Endothelial cell of umbilical vein (primary cell): ENCODE measurements at regions of chr4 and their contacts with region 1.

Region 1: DNA sequence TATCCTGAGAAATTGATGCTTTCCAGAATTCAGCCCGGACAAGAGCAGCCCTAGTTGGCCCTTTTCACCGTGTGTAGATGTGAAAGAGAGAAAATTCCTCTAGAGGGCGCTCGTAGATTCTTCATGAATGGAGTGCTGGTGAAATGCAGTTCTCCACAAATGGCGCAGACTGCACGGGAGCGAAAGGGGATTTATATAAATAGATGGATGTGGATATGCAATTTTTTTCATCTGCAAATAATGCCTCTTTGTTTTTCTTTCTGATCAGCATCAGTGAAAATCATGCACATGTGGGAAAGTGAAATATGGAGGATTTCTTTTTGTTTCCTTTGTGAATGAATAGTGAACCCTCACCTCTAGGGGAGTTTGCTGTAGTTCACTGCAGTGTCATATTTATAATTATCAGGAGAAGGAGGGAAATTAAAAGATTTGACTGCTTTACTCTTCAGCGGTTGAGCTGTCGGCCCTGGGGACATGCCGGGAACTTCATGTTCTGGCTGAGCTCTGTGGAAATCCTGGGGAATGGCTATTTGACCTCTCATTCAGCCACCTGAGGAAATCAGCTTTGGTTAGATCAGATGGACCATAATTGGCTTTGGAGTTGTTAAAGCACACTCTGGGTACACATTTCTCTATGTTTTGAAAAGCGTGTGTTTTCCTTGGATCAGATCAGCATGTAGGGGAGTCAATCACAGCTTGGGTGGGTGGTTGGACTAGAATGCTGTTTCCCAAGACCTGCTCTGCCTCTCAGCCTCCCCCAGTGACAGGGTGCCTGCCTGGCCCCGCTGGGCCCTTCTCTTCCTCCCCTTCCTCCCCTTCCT is 115.0 kb upstream of the SHISA3 start:
- DNase-seq: peak; percentile 71
- H3K4me3 ChIP-seq: no peak overlapping the region
- H3K27ac ChIP-seq: no peak overlapping the region
- H3K4me1 ChIP-seq: peaks cover 3% of the 10 kb centered on the region
- H3K27me3 ChIP-seq: peaks cover 0 to 4% of the 10 kb centered on the region in 2 experiments
- CTCF ChIP-seq: peak; percentile 56 to 71
- POLR2A ChIP-seq: no peak

Region 2: DNA sequence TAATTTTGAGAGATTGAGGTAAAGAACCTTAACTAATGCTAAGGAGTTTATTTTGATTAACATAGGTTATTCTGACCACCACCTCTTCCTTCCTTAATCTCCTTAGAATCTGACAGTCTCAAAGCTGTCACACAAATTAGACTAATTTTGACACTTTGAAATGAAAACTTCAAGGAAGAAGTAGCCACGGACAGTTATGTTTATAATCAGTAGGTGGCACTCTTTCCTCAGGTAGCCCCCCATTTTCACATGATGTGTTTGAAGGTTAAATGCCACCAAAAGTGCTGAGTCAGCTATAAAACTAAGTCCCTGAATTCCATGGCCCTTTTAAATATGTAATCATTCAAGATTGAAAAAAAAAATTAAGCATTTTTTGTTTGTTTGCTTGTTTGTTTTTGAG is 324.7 kb before region 1 on chr4:
- CTCF ChIA-PET with region 1: interaction called, 4 read pairs
- POLR2A ChIA-PET with region 1: no interaction called
- dilution Hi-C with region 1: no loop called
- intact Hi-C with region 1: loop called (anchors 2 kb)
- DNase-seq: peak; percentile 31
- H3K4me3 ChIP-seq: no peak overlapping the region
- H3K27ac ChIP-seq: no peak overlapping the region
- H3K4me1 ChIP-seq: no peaks in the 10 kb centered on the region
- H3K27me3 ChIP-seq: no peaks in the 10 kb centered on the region
- CTCF ChIP-seq: peak in 1 of 2 donors; percentile 24
- POLR2A ChIP-seq: no peak

Region 3: GRCh38 chr4:42268824-42269223 is 13.5 kb before region 1 on chr4:
- CTCF ChIA-PET with region 1: interaction called, 11 read pairs
- POLR2A ChIA-PET with region 1: no interaction called
- dilution Hi-C with region 1: no loop called
- intact Hi-C with region 1: no loop called
- DNase-seq: no peak
- H3K4me3 ChIP-seq: no peak overlapping the region
- H3K27ac ChIP-seq: no peak overlapping the region
- H3K4me1 ChIP-seq: no peaks in the 10 kb centered on the region
- H3K27me3 ChIP-seq: peaks cover 2 to 3% of the 10 kb centered on the region in 2 experiments
- CTCF ChIP-seq: no peak
- POLR2A ChIP-seq: no peak

Region 4: DNA sequence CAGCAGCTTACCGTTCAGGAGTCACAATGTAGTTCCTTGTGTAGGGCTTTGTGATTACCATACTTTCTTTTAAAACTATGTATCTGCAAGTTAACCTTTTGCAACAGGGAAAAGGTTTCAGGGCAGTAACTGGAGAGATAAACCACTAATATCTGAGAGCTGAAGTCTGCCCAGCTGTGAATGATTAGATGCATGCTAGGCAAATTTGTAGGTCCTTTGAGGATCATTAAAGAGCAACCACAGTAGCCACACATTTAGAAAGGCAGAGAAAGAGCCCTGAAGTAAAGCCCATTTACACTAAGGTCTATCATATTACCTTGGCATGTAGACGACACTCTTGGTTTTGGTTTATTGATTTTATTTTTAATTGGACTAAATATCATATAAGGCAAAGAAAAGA is 314.6 kb after region 1 on chr4:
- CTCF ChIA-PET with region 1: no interaction called
- POLR2A ChIA-PET with region 1: no interaction called
- dilution Hi-C with region 1: no loop called
- intact Hi-C with region 1: no loop called
- DNase-seq: no peak
- H3K4me3 ChIP-seq: no peak overlapping the region
- H3K27ac ChIP-seq: no peak overlapping the region
- H3K4me1 ChIP-seq: no peaks in the 10 kb centered on the region
- H3K27me3 ChIP-seq: no peaks in the 10 kb centered on the region
- CTCF ChIP-seq: no peak
- POLR2A ChIP-seq: no peak